CD8-positive, alpha-beta T cell (primary cell): ENCODE measurements at regions of chr7 and their contacts with region 1.

Region 1: DNA sequence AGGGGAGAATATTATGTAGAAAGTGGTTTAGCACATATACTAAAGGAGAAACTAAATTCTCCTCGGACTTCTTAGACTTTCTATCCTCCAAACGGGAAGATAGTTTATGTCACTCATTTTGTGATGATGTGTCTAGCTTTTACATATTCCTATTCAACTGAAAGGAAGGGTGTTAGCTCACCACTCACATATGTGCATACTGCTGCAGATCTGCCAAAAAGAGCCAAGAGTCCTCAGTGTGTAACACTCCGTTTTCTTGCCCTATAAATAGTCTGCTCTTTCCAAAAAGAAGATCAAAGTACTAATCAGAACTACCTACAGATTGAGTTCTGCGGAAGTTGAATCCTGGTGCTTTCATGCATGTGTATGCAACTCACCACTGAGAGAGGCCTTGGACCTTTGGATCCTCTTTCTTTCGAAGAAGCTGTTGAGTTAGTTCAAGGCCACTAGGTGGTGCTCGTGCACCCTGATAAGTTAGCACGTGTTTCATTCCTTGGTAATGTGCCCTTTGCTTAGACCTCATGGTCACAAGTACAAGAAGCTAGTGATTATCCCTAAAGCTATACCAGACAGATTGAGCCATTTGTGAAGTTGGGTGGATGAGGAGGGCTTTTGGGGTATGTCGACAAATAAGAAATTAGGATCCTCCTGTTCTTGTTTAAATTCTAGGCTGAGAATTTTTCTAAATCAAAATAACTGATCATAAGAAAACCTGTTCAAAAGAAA is 14.1 kb downstream of the YAE1 start:
- DNase-seq: peak; percentile 44 to 91 (median 77)
- ATAC-seq: peak; percentile 97
- H3K4me3 ChIP-seq: no peak overlapping the region
- H3K4me3 Mint-ChIP-seq: no peak overlapping the region
- H3K27ac ChIP-seq: no peak overlapping the region
- H3K27ac Mint-ChIP-seq: peak overlapping the region; percentile 7
- H3K4me1 ChIP-seq: no peaks in the 10 kb centered on the region
- H3K4me1 Mint-ChIP-seq: peaks cover 6% of the 10 kb centered on the region
- H3K27me3 ChIP-seq: no peaks in the 10 kb centered on the region
- H3K27me3 Mint-ChIP-seq: no peaks in the 10 kb centered on the region
- CTCF ChIP-seq: peak; percentile 91

Region 2: DNA sequence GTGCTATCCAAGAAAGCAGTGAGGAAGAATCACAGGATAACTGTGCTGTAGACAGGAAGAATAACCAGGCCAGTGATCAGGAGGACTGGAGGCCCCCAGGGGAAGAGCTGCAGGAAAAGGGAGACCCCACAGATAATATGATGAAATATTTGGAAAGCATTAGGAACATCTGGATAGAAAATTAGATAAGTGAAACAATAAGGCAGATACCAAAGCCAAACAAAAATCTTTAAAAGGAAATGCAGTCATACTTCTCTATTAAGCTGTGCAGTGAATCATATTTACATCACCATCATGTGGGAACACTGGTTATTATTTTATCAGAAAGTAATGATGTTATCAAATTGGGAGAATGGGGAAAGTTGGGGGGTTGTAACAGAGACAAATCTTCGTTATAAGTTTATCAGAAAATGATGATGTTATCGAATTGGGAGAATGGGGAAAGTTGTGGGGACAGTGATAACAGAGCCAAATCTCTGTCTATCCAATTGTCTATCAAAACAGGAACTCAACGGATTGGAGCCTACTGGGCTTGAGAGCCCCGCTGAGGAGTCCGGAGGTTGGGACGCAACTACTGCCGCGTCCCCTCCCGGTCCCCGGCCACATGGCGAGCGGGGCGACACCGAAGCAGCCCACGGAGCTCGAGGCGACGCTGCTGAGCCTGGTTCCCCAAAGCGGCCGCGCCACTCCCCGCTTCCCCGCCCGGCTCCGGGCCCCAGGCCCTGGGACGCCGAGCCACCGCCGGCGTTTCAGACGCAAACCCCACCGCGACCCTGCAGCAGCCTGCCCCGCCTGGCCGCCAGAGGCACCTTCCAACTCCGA is 29.0 kb after region 1 on chr7:
- CTCF ChIA-PET with region 1: interaction called, 13 read pairs
- POLR2A ChIA-PET with region 1: no interaction called
- intact Hi-C with region 1: no loop called
- DNase-seq: peak in 5 of 9 experiments; percentile 17 to 64 (median 35)
- ATAC-seq: peak; percentile 55
- H3K4me3 ChIP-seq: peak overlapping the region in 1 of 2 experiments; percentile 5
- H3K4me3 Mint-ChIP-seq: peak overlapping the region; percentile 62
- H3K27ac ChIP-seq: no peak overlapping the region
- H3K27ac Mint-ChIP-seq: peak overlapping the region; percentile 47
- H3K4me1 ChIP-seq: peaks cover 24% of the 10 kb centered on the region
- H3K4me1 Mint-ChIP-seq: peaks cover 34% of the 10 kb centered on the region
- H3K27me3 ChIP-seq: peaks cover 0 to 8% of the 10 kb centered on the region in 2 experiments
- H3K27me3 Mint-ChIP-seq: peaks cover 24% of the 10 kb centered on the region
- CTCF ChIP-seq: no peak

Region 3: DNA sequence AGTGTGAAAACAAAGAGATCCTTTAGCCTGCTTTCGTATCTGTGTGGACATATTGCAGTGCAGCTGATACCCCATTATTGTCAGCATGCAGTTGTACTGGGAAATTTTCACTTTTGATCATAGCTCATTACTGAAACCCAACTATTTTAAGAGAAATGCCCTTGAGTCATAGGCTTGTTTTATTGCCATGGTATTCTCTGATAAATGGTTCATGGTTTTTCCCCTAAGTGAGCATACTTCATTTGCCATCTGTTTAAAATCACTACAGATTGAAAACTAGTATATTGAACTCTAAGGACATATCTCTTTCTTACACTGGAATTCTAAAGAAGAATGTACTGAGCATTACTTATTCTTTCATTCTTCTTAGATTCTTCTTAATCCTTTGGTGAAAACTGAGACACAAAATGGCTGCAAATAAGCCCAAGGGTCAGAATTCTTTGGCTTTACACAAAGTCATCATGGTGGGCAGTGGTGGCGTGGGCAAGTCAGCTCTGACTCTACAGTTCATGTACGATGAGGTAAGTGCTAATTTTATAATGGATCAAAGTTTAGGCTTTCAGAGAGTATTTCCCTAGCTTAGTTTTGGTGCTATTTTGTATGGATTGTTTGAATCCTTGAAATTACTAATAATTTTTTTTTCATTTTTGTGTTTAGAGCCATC is 106.1 kb after region 1 on chr7:
- CTCF ChIA-PET with region 1: interaction called, 5 read pairs
- POLR2A ChIA-PET with region 1: no interaction called
- intact Hi-C with region 1: loop called in 1 of 2 experiments (anchors 5 kb)
- DNase-seq: no peak
- ATAC-seq: no peak
- H3K4me3 ChIP-seq: no peak overlapping the region
- H3K4me3 Mint-ChIP-seq: no peak overlapping the region
- H3K27ac ChIP-seq: no peak overlapping the region
- H3K27ac Mint-ChIP-seq: peak overlapping the region; percentile 50
- H3K4me1 ChIP-seq: peaks cover 6% of the 10 kb centered on the region
- H3K4me1 Mint-ChIP-seq: peaks cover 34% of the 10 kb centered on the region
- H3K27me3 ChIP-seq: no peaks in the 10 kb centered on the region
- H3K27me3 Mint-ChIP-seq: no peaks in the 10 kb centered on the region
- CTCF ChIP-seq: no peak

Region 4: GRCh38 chr7:39746103-39746819 is 165.9 kb after region 1 on chr7:
- CTCF ChIA-PET with region 1: interaction called, 556 read pairs
- POLR2A ChIA-PET with region 1: interaction called, 14 read pairs
- intact Hi-C with region 1: loop called (anchors 1 kb)
- DNase-seq: peak in 8 of 9 experiments; percentile 30 to 75 (median 65)
- ATAC-seq: peak; percentile 65
- H3K4me3 ChIP-seq: no peak overlapping the region
- H3K4me3 Mint-ChIP-seq: peak overlapping the region; percentile 49
- H3K27ac ChIP-seq: no peak overlapping the region
- H3K27ac Mint-ChIP-seq: peak overlapping the region; percentile 75
- H3K4me1 ChIP-seq: peaks cover 4% of the 10 kb centered on the region
- H3K4me1 Mint-ChIP-seq: peaks cover 5% of the 10 kb centered on the region
- H3K27me3 ChIP-seq: no peaks in the 10 kb centered on the region
- H3K27me3 Mint-ChIP-seq: no peaks in the 10 kb centered on the region
- CTCF ChIP-seq: peak; percentile 62